Sigmoid colon (tissue), 7 donors: ENCODE measurements at regions of chr12 and their contacts with region 1.

Region 1: DNA sequence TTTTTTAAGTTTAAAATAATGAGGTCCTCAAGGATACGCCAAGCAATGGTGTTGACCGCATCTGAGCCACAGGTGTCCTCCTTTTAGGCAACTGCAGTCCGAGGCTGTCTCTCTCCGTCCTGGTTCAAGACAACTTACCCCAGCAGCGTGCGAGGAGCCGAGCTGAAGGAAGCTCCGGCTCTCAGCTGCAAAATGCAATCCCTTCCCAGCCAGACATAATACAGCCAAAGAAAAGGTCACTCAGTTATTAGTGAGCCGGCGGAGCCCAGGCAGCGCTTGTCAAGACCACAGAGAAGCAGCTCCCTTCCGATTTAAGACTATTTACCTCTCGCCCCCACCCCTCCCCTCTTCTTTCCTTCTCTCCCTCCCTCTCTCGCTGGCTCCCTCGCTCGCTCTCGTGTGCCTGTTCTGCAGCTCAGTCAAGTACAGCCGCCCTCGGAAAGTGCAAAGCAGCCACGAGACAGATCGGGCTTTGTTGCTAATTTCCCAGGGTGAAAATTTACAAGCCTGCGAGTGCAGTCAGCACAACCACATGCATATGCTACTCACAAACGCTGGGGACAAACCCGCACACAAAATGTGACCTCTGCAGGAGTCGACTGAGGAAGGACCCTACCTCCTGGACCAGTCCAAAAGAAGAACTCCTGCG is 363 bp upstream of the LMO3 start:
- DNase-seq: peak; percentile 84
- H3K4me3 ChIP-seq: peak overlapping the region; percentile 50 to 67 (median 56)
- H3K27ac ChIP-seq: peak overlapping the region; percentile 84 to 91 (median 84)
- H3K4me1 ChIP-seq: peaks cover 0 to 18% (median 5%) of the 10 kb centered on the region in 4 donors
- H3K27me3 ChIP-seq: no peaks in the 10 kb centered on the region
- CTCF ChIP-seq: no peak
- EP300 ChIP-seq: no peak
- POLR2A ChIP-seq: peak in 1 of 2 donors; percentile 45

Region 2: DNA sequence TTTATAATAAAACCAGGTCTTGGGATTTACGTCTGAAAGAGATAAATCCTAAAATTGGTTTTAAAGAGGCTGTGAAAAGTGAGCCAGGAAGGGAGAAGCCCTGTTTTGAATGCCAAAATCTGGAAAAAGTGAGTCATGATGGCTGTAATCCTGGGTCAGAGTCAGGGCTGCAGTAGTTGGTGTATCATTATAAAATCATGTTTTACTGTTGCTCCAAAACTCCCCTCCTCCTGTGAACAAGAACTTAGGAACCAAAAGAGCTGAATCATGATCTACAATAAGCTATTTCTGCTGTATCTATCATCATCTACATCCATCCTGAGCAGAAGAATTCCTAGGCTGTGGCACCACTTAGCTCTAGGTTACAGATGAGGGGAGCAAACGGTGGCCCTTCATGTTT is 79.6 kb before region 1 on chr12:
- intact Hi-C with region 1: loop called (anchors 5 kb)
- DNase-seq: no peak
- H3K4me3 ChIP-seq: no peak overlapping the region
- H3K27ac ChIP-seq: peak overlapping the region; percentile 21 to 71 (median 26)
- H3K4me1 ChIP-seq: peaks cover 0 to 19% (median 5%) of the 10 kb centered on the region in 4 donors
- H3K27me3 ChIP-seq: no peaks in the 10 kb centered on the region
- CTCF ChIP-seq: no peak
- EP300 ChIP-seq: no peak
- POLR2A ChIP-seq: no peak